ENCODE measurements at regions of chr9 and their contacts with region 1.

Region 1: DNA sequence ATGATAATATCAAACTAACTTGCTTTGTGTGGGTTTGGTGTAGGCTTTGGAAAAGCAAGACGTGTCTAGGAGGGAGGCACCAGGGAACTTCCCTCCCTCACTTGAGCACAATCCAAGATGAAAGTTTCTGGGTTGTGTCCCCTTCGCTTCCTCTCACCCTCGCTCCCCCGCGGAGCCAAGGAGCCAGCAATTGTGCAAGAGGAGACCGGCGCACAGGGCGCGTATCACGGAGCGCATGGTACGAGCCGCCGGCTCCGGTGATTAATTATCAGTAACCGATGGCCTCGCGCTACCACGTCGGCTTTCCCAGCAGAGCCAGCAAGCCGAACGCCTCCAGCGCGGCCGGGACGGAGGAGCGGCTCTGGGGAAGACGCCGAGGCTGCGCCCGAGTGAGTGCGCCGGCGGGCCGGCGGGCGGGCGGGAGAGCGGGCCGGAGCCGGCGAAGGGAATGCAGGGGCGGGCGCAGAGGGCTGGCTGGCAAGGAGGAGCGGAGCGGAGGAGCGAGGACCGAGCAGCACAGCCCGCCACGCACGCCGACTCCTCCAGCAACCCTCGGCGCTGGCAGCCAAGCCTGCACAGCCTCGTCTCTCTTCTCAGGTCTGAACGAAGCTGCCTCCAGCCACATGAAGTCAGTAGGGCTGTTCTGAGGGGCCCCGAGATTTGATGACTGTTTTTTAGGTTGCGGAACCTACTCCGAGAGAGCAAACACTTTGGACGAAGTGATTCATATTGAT is 143.6 kb downstream of the BNC2 start:
- DNase-seq: peak; percentile 54 to 75
- ATAC-seq: peak; percentile 53 to 77
- H3K4me3 ChIP-seq: peak overlapping the region; percentile 61 to 70 (median 67)
- H3K27ac ChIP-seq: peak overlapping the region; percentile 79 to 86 (median 84)
- H3K4me1 ChIP-seq: peaks cover 14 to 15% of the 10 kb centered on the region in 2 donors
- H3K27me3 ChIP-seq: peaks cover 0 to 10% (median 0%) of the 10 kb centered on the region in 3 donors
- CTCF ChIP-seq: no peak
- POLR2A ChIP-seq: peak; percentile 45 to 66

Region 2: GRCh38 chr9:16191691-16192402 is 535.0 kb before region 1 on chr9:
- in situ Hi-C with region 1: no loop called
- intact Hi-C with region 1: loop called (anchors 10 kb)
- DNase-seq: peak; percentile 28 to 55
- ATAC-seq: peak; percentile 66 to 68
- H3K4me3 ChIP-seq: no peak overlapping the region
- H3K27ac ChIP-seq: no peak overlapping the region
- H3K4me1 ChIP-seq: peaks cover 3% of the 10 kb centered on the region in 2 donors
- H3K27me3 ChIP-seq: no peaks in the 10 kb centered on the region
- CTCF ChIP-seq: peak; percentile 16 to 78 (median 70)
- POLR2A ChIP-seq: no peak

Region 3: GRCh38 chr9:16530669-16531642 is 195.9 kb before region 1 on chr9:
- in situ Hi-C with region 1: no loop called
- intact Hi-C with region 1: loop called (anchors 5 kb)
- DNase-seq: peak; percentile 55 to 73
- ATAC-seq: peak; percentile 82 to 90
- H3K4me3 ChIP-seq: no peak overlapping the region
- H3K27ac ChIP-seq: peak overlapping the region; percentile 55 to 69 (median 61)
- H3K4me1 ChIP-seq: peaks cover 0 to 26% of the 10 kb centered on the region in 2 donors
- H3K27me3 ChIP-seq: no peaks in the 10 kb centered on the region
- CTCF ChIP-seq: no peak
- POLR2A ChIP-seq: no peak

Region 4: DNA sequence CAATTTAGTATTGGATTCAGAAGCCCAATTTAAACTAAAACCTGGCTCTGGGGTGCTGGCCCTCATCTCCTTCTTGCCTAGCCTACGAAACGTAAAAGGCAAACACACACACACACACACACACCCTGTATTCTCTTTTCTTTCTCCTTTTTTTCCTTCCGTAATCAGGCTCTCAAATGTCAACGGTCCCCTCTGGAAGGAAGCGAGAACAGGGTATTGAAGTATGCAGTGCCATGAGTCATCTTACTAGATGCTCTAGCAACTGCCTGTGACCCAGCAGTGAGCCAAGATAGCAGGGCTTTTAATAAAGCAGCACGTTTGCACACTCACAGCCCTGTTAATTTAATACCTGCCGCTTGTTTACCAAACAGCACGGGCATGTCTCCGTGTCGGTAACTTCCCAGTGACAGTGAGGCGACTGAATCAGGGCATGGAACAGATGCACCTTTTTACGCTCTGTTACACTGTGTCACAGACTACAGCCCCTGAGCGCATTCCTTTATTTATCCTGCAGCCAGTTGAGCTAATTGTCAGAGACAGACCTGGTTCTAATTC is 100.2 kb before region 1 on chr9:
- in situ Hi-C with region 1: no loop called
- intact Hi-C with region 1: loop called (anchors 5 kb)
- DNase-seq: peak; percentile 60 to 78
- ATAC-seq: peak; percentile 94 to 95
- H3K4me3 ChIP-seq: peak overlapping the region in 3 of 4 donors; percentile 9 to 28 (median 19)
- H3K27ac ChIP-seq: peak overlapping the region; percentile 72 to 80 (median 79)
- H3K4me1 ChIP-seq: peaks cover 22 to 44% of the 10 kb centered on the region in 2 donors
- H3K27me3 ChIP-seq: no peaks in the 10 kb centered on the region
- CTCF ChIP-seq: no peak
- POLR2A ChIP-seq: peak in 1 of 2 donors; percentile 34

Region 5: DNA sequence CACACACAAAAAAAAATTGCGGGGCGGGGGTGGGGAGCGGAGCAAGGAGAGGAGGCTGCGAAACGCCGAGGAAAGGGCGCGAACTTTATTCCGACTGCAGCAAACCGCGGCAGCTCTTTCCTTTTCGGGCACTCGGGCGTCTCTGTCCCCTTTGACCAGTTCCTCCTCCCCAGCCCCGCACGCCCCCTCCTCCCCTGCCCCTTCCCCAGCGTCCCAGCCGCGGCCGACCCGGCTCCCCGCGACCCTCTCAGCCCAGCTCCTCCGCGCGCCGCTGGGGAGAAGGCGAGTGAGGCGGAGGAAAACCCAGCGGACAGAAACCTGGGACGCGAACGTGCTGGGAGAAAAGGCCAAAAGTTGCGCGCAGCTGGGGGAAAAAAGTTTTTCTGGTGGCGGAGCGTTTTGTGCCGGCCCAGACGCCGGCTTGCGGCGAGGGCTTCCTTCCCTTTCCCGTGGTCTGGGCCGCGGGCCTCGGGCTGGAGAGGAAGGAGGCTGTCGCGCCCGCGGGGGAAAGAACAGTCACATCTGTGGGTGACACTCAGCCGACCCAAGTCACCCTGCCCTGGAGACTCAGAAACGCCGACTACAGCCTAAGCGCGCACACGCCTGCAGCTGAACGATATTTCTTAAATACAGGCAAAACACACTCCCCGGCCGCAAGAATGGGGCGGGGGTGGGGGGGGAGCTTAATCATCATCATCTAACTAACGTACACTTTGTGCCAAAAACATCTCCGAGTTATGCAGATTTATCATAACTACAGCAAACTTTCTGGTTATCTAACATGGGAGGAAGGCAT is 144.7 kb after region 1 on chr9:
- in situ Hi-C with region 1: loop called in 1 of 4 experiments (anchors 5 kb)
- intact Hi-C with region 1: loop called (anchors 2 kb)
- DNase-seq: peak in 1 of 2 donors; percentile 35
- ATAC-seq: peak; percentile 24 to 34
- H3K4me3 ChIP-seq: peak overlapping the region; percentile 71 to 85 (median 76)
- H3K27ac ChIP-seq: peak overlapping the region; percentile 80 to 90 (median 84)
- H3K4me1 ChIP-seq: peaks cover 3 to 9% of the 10 kb centered on the region in 2 donors
- H3K27me3 ChIP-seq: peaks cover 0 to 4% (median 0%) of the 10 kb centered on the region in 3 donors
- CTCF ChIP-seq: no peak
- POLR2A ChIP-seq: peak; percentile 10 to 27

Region 6: GRCh38 chr9:17134396-17135294 is 407.8 kb after region 1 on chr9 and contains the start of gene CNTLN:
- in situ Hi-C with region 1: no loop called
- intact Hi-C with region 1: loop called (anchors 10 kb)
- DNase-seq: peak; percentile 71 to 80
- ATAC-seq: peak; percentile 88 to 92
- H3K4me3 ChIP-seq: peak within 1 kb of the TSS; percentile 70 to 93 (median 83)
- H3K27ac ChIP-seq: peak within 1 kb of the TSS; percentile 78 to 85 (median 82)
- H3K4me1 ChIP-seq: peaks cover 5 to 10% of the 10 kb centered on the region in 2 donors
- H3K27me3 ChIP-seq: no peaks in the 10 kb centered on the region
- CTCF ChIP-seq: peak in 1 of 5 experiments; percentile 8
- POLR2A ChIP-seq: peak; percentile 48 to 58
- total RNA-seq, gene CNTLN: 1.3 to 6.6 (median 2.4) TPM